ENCODE measurements at regions of chr19 and their contacts with region 1.

Region 1: DNA sequence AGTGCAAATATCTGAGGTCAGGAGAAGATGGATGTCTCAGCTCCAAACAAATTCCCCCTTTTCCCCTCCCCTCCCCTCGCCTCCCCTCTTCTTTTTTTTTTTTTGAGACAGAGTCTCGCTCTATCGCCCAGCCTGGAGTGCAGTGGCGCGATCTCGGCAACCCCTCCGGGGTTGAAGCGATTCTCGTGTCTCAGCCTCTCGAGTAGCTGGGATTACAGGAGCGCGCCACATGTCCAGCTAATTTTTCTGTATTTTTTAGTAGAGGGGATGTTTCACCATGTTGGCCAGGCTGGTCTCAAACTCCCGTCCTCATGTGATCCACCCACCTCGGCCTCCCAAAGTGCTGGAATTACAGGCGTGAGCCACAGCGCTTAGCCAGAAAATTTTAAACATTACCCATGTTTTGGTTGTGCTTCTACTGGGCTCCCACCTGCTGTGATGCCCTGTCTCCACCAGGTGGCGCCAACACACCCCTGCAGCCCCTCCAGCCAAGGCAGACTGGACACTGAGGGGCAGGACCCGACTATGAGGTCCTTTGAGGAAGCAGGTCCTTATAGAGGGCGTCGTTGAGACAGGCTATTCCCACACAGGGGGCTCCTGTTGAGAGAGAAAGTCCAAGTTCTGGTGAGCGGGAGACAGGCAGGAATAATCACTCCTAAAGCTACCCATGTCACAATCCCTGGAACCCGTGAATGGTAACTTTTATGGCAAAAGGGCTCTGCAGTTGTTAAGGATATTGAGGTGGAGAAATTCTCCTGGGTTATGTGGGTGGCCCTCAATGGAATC is 6.3 kb downstream of the ERICH4 start:
- DNase-seq: peak; percentile 48
- H3K4me3 ChIP-seq: peak overlapping the region; percentile 46
- H3K27ac ChIP-seq: no peak overlapping the region
- H3K27me3 ChIP-seq: peaks cover 12% of the 10 kb centered on the region
- CTCF ChIP-seq: peak; percentile 99

Region 2: DNA sequence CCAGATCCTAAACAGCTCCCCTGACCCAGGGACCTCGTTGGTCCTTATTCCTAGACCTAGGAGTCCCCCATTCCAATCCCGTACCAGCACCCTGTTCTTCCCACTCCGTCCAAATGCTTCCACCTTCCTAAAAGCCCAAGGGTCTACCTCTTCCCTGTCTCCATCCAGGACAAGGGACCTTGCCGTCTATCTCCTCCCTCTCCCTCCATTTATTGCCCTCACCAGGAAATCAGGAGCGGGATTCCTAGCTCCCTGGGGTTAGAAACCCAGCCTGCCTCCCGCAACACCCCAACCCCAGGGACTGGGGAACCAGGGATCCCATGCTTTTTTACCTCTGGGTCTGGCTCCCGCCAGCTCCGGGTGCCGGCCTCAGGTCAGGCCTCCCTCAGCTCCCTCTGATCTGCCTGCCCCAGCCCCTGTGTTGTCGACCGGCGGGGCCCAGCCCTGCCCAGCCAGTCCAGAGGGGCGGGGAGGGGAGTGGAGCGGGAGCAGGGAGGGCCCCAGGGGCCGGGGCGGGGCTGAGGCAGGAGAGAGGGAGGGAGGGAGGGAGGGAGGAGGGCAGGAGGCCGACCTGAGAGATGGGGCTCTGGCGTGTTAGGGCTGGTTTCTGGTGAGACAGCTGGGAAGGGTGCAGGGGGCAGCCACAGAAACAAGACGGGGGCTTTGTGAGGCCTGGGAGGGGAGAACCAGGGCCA is 22.2 kb before region 1 on chr19 and contains the start of gene B3GNT8:
- CTCF ChIA-PET with region 1: interaction called, 11 read pairs
- POLR2A ChIA-PET with region 1: no interaction called
- DNase-seq: peak; percentile 11
- H3K4me3 ChIP-seq: peak within 1 kb of the TSS; percentile 55
- H3K27ac ChIP-seq: no peak within 1 kb of the TSS
- H3K27me3 ChIP-seq: no peaks in the 10 kb centered on the region
- CTCF ChIP-seq: no peak
- polyA plus RNA-seq, gene B3GNT8: 0.14 and 0.29 TPM in 2 replicates

Region 3: DNA sequence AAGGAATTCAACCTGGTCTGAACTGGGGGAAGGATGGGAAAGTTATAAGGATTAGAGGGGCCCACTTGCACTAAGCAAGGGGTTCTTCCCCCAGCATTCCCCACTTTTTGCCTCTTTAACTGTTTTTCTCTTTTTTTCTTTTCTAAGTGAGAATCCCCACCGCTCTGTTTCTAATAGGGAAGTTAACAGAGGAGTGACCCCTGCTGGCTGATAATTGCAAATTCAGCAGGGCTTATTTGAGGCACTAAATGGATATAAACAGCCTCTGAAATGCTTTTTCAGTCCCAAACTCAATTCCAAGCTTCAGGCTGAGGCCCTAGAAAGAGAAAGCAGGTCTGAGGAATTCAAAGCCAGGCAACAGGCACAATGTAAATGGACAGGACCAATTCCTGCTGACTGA is 88.5 kb after region 1 on chr19:
- CTCF ChIA-PET with region 1: interaction called, 43 read pairs
- POLR2A ChIA-PET with region 1: no interaction called
- DNase-seq: no peak
- H3K4me3 ChIP-seq: no peak overlapping the region
- H3K27ac ChIP-seq: no peak overlapping the region
- H3K27me3 ChIP-seq: peaks cover 9% of the 10 kb centered on the region
- CTCF ChIP-seq: peak; percentile 62

Region 4: GRCh38 chr19:41563854-41564514 is 114.7 kb after region 1 on chr19:
- CTCF ChIA-PET with region 1: interaction called, 75 read pairs
- POLR2A ChIA-PET with region 1: no interaction called
- DNase-seq: no peak
- H3K4me3 ChIP-seq: no peak overlapping the region
- H3K27ac ChIP-seq: no peak overlapping the region
- H3K27me3 ChIP-seq: peaks cover 38% of the 10 kb centered on the region
- CTCF ChIP-seq: no peak

Region 5: DNA sequence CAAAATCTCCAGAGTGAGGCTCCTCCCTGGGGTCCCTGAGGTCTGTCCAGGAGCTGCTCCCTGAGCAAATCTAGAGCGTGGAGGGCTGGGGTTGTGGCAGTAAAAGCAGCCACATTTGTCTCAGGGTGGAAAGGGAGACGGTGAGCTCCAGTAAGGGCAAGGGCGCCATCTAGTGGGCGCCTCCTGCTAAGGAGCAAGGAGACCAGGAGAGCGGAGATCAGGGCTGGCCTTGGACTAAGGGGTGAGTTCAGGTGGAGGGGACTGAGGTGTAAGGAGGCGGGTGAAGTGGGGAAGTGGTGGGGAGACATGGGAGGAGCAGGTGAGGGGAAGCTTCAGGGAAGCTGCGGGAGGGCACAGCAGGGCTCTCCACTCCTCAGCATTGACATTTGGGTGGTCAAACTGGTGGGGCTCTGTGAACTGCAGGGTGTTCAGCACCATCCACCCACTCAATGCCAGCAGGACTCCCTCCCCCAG is 121.4 kb after region 1 on chr19:
- CTCF ChIA-PET with region 1: interaction called, 75 read pairs
- POLR2A ChIA-PET with region 1: no interaction called
- DNase-seq: peak; percentile 10
- H3K4me3 ChIP-seq: no peak overlapping the region
- H3K27ac ChIP-seq: no peak overlapping the region
- H3K27me3 ChIP-seq: peaks cover 17% of the 10 kb centered on the region
- CTCF ChIP-seq: peak; percentile 88